Pancreas (tissue), 10 donors: ENCODE measurements at regions of chr5 and their contacts with region 1.

Region 1: DNA sequence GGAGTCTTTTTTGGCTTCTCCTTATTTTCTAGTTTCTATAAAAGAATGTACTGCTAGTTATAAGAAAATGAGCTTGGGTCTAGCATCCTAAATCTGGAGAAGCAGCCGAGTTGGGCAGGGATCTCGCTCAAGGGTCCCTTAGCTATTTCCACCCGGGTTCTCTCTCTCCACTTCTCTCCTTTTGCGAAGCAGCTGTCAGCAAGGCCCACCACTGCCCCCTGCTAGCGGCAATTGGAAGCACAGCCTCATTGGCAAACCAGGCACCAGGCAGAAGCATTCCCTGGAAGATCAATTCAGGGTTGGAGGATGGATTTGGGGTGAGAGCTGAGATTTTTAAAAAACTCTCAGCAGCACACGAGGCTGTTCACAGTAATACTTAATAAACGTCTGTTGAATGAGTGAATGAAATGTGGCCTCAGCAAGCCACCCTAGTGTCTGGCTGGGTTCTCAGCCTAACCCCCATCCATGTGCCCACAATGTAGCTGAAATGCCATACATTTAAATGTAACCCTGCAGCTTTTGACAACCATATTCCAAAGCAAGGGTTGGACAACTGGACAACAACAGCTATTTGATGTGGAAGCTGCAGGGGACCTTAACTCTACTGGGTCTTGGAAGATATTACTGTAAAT is 34.6 kb upstream of the TNIP1 start:
- DNase-seq: peak; percentile 58 to 89 (median 80)
- ATAC-seq: peak; percentile 81 to 97 (median 94)
- H3K4me3 ChIP-seq: no peak overlapping the region
- H3K27ac ChIP-seq: no peak overlapping the region
- H3K4me1 ChIP-seq: peaks cover 0 to 3% (median 0%) of the 10 kb centered on the region in 3 donors
- H3K27me3 ChIP-seq: no peaks in the 10 kb centered on the region
- CTCF ChIP-seq: peak; percentile 65 to 90 (median 87)

Region 2: DNA sequence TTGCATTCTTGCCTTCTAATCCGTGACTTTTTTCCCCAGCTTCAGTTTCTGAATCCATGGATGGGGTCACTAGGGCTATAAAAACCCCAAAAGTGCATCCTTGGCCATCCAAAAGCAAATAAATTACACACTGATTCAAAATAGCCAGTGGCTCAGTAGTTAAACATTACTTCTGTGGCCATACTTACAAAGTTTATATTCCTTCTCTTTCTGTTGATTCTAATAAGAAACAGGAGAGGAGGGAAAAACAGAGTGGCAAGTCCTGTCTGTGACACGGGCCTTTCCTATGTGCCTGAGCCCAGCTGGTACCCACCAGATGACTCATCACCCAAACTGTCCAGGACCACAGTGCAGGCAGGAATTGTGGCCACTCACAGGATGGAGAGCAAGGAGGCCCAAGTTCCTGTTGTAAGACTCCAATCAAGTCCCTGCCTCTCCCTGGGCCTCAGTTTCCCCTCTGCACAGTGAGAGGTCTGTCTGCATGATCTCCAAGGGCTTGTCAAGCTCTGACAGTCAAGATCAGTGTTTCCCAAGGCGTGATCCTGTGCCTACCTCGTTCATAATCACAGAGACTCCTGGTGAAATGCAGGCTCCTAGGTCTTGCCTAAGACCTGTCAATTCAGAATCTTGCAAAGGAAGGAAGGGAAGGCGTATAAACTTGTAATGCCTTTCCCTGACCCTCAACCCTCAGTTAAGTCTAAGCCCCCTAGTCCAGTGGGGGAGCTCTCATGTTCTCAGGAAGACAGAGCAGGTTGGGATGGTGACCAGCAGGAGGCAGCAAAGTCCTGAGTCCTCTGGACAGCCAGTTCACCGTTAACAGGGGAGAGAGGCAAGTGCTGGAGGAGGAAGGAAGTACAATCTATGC is 64.1 kb before region 1 on chr5:
- intact Hi-C with region 1: loop called in 2 of 3 experiments (anchors 2 to 5 kb)
- DNase-seq: peak in 5 of 6 donors; percentile 63 to 85 (median 78)
- ATAC-seq: peak; percentile 72 to 93 (median 88)
- H3K4me3 ChIP-seq: no peak overlapping the region
- H3K27ac ChIP-seq: no peak overlapping the region
- H3K4me1 ChIP-seq: peaks cover 0 to 4% (median 0%) of the 10 kb centered on the region in 3 donors
- H3K27me3 ChIP-seq: no peaks in the 10 kb centered on the region
- CTCF ChIP-seq: peak; percentile 58 to 74 (median 64)

Region 3: DNA sequence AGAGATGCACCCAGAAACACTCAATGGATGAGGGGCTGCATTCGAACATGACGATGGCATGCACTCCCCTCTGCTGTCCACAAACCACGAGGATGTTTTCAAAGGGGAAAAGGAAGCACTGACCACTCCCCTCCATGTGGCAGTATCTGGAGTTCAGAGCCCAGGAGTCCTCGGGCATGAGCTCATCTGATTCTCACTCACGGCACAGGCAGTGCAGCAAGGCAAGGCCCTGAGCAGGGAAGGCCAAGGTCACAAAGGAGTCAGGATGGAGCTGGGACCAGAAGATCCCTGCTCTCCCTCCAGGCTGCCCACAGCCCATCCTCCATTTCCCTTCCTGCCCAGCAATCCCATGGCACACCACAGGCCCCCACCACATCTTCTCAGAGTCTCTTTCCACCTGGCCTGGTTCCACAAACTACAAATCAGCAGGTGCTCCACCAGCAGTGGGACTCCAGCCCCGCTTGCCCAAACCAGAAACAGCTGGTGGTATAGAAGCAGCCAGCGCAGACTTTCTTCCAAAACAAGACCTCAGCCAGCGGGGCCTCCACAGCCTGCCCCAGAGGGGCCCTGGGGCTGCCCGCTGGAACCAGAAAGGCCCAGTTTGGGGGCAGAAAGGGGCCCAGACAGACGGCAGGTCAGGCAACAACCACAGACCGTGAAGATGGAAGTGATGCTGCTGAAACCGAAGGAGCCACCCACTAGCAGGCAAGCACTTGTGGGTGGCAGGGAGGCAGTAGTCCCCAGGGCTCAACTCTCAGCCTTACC is 46.8 kb before region 1 on chr5:
- intact Hi-C with region 1: loop called in 1 of 3 experiments (anchors 10 kb)
- DNase-seq: no peak
- ATAC-seq: peak in 3 of 4 donors; percentile 22 to 45 (median 28)
- H3K4me3 ChIP-seq: no peak overlapping the region
- H3K27ac ChIP-seq: peak overlapping the region in 2 of 4 donors; percentile 6 to 50
- H3K4me1 ChIP-seq: peaks cover 0 to 33% (median 6%) of the 10 kb centered on the region in 3 donors
- H3K27me3 ChIP-seq: no peaks in the 10 kb centered on the region
- CTCF ChIP-seq: no peak